Caco-2 (cell line): ENCODE measurements at regions of chr17 and their contacts with region 1.

Region 1: GRCh38 chr17:65698381-65699061 is 137.1 kb upstream of the AXIN2 start:
- DNase-seq: peak; percentile 18 to 40
- H3K4me3 ChIP-seq: no peak overlapping the region
- H3K4me3 Mint-ChIP-seq: peak overlapping the region; percentile 66
- H3K27ac Mint-ChIP-seq: peak overlapping the region; percentile 77
- H3K4me1 ChIP-seq: peaks cover 13% of the 10 kb centered on the region; the same call in 1 of the 2 replicates
- H3K4me1 Mint-ChIP-seq: peaks cover 19% of the 10 kb centered on the region
- H3K27me3 ChIP-seq: no peaks in the 10 kb centered on the region
- H3K27me3 Mint-ChIP-seq: no peaks in the 10 kb centered on the region
- CTCF ChIP-seq: no peak

Region 2: DNA sequence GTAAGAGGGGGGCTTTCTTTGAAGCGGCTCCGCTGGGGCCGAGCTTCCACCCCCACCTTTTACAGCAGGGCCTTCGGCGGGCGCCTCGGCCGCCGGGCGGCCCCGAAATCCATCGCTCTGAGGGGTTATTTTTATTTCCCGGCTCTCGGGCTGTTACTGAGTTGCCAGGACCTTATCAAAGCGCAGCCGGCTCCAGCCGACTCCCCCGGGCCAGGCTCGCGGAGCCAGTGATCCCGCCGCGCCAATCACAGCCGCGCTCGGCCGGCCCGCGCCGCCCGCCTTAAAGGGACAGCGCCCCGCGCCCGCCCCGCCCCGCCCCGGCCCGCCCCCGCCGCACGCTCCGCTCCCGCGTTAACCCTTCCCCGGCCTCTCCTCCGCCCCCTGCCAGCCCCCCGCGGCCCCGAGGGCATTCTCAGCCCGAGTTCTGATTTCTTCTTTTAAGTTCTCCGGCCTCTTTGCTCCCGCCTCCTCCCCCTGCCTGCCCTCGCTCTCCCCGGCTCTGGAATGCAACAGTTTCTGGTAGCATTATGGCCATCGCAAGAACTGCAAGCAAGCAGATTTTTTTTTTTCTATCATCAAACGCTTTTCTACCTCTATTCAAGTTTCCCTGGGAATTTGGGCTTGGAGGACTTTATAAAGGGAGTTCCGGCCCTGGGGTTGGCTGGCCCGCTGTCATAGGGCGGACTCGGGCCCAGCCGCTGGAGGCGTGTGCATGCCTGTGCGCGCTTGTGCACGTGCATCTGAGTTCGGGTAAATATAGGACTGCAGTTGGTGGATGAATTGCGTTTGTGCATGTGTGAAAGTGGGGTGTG is 136.9 kb before region 1 on chr17 and contains the start of gene AXIN2:
- CTCF ChIA-PET with region 1: no interaction called
- POLR2A ChIA-PET with region 1: no interaction called
- intact Hi-C with region 1: loop called (anchors 10 kb)
- DNase-seq: peak; percentile 96 to 97
- H3K4me3 ChIP-seq: peak within 1 kb of the TSS; percentile 86
- H3K4me3 Mint-ChIP-seq: no peak within 1 kb of the TSS
- H3K27ac Mint-ChIP-seq: peak within 1 kb of the TSS; percentile 91
- H3K4me1 ChIP-seq: peaks cover 44% of the 10 kb centered on the region
- H3K4me1 Mint-ChIP-seq: peaks cover 24% of the 10 kb centered on the region
- H3K27me3 ChIP-seq: no peaks in the 10 kb centered on the region
- H3K27me3 Mint-ChIP-seq: no peaks in the 10 kb centered on the region
- CTCF ChIP-seq: peak; percentile 25 to 33
- total RNA-seq, gene AXIN2: 141 and 168 TPM in 2 replicates

Region 3: DNA sequence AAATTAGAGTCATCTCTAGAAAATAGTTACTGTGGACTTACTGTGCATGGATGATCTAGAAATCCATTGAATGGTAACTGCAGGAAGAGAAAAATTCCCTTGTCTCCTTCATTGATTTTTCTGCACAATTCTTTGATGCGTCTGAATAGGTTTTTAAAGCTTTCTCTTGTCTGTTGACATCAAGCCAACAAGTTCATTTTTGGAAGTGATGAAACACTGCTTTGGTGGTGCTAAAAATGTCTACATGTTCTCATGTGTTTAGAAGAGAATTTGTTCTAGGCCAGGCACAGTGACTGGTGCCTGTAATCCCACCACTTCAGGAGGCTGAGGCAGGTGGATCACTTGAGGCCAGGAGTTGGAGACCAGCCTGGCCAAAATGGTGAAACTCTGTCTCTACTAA is 80.0 kb before region 1 on chr17:
- CTCF ChIA-PET with region 1: no interaction called
- POLR2A ChIA-PET with region 1: no interaction called
- intact Hi-C with region 1: loop called (anchors 1 kb)
- DNase-seq: no peak
- H3K4me3 ChIP-seq: no peak overlapping the region
- H3K4me3 Mint-ChIP-seq: no peak overlapping the region
- H3K27ac Mint-ChIP-seq: no peak overlapping the region
- H3K4me1 ChIP-seq: no peaks in the 10 kb centered on the region
- H3K4me1 Mint-ChIP-seq: no peaks in the 10 kb centered on the region
- H3K27me3 ChIP-seq: no peaks in the 10 kb centered on the region
- H3K27me3 Mint-ChIP-seq: no peaks in the 10 kb centered on the region
- CTCF ChIP-seq: no peak

Region 4: GRCh38 chr17:65742403-65743307 is 44.1 kb after region 1 on chr17:
- CTCF ChIA-PET with region 1: no interaction called
- POLR2A ChIA-PET with region 1: no interaction called
- intact Hi-C with region 1: no loop called
- DNase-seq: no peak
- H3K4me3 ChIP-seq: no peak overlapping the region
- H3K4me3 Mint-ChIP-seq: no peak overlapping the region
- H3K27ac Mint-ChIP-seq: no peak overlapping the region
- H3K4me1 ChIP-seq: no peaks in the 10 kb centered on the region
- H3K4me1 Mint-ChIP-seq: no peaks in the 10 kb centered on the region
- H3K27me3 ChIP-seq: no peaks in the 10 kb centered on the region
- H3K27me3 Mint-ChIP-seq: no peaks in the 10 kb centered on the region
- CTCF ChIP-seq: no peak